IMR-90 (cell line): ENCODE measurements at regions of chr11 and their contacts with region 1.

Region 1: DNA sequence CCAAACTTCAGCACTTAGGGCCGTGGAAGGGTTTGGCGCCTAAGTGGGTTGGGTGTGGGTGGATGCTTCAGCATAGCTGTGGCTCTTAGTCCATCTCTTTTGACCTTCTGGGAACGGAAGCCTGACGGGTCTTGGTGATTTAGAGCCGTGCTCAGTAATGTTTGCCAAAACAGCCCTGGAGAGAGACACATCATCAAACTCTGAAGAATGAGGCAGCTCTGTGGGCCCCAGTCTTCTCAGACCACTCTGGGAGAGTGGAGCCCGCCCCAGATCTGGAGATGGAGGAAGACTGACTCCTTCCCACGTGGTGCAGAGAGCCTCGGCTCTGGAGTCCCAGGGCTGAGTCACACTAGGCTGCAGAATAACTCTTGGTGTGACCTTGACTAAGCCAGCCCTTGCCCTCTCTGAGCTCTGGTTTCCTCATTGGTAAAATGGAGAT is 168.9 kb downstream of the C11orf91 start:
- DNase-seq: peak; percentile 80
- ATAC-seq: peak; percentile 76
- H3K4me3 ChIP-seq: no peak overlapping the region
- H3K27ac ChIP-seq: no peak overlapping the region
- H3K4me1 ChIP-seq: peaks cover 4% of the 10 kb centered on the region
- H3K27me3 ChIP-seq: no peaks in the 10 kb centered on the region
- CTCF ChIP-seq: no peak
- POLR2A ChIP-seq: no peak
- RAD21 ChIP-seq: no peak

Region 2: GRCh38 chr11:33379947-33380346 is 151.8 kb before region 1 on chr11:
- CTCF ChIA-PET with region 1: no interaction called
- POLR2A ChIA-PET with region 1: no interaction called
- dilution Hi-C with region 1: no loop called
- in situ Hi-C with region 1: no loop called
- intact Hi-C with region 1: loop called (anchors 5 kb)
- DNase-seq: no peak
- ATAC-seq: no peak
- H3K4me3 ChIP-seq: no peak overlapping the region
- H3K27ac ChIP-seq: no peak overlapping the region
- H3K4me1 ChIP-seq: no peaks in the 10 kb centered on the region
- H3K27me3 ChIP-seq: peaks cover 2% of the 10 kb centered on the region; the same call in 1 of the 2 replicates
- CTCF ChIP-seq: no peak
- POLR2A ChIP-seq: no peak
- RAD21 ChIP-seq: no peak

Region 3: GRCh38 chr11:33452836-33453624 is 78.7 kb before region 1 on chr11:
- CTCF ChIA-PET with region 1: no interaction called
- POLR2A ChIA-PET with region 1: no interaction called
- dilution Hi-C with region 1: no loop called
- in situ Hi-C with region 1: no loop called
- intact Hi-C with region 1: loop called (anchors 5 kb)
- DNase-seq: peak; percentile 94
- ATAC-seq: peak; percentile 91
- H3K4me3 ChIP-seq: no peak overlapping the region
- H3K27ac ChIP-seq: no peak overlapping the region
- H3K4me1 ChIP-seq: peaks cover 8% of the 10 kb centered on the region
- H3K27me3 ChIP-seq: no peaks in the 10 kb centered on the region
- CTCF ChIP-seq: no peak
- POLR2A ChIP-seq: no peak
- RAD21 ChIP-seq: no peak

Region 4: DNA sequence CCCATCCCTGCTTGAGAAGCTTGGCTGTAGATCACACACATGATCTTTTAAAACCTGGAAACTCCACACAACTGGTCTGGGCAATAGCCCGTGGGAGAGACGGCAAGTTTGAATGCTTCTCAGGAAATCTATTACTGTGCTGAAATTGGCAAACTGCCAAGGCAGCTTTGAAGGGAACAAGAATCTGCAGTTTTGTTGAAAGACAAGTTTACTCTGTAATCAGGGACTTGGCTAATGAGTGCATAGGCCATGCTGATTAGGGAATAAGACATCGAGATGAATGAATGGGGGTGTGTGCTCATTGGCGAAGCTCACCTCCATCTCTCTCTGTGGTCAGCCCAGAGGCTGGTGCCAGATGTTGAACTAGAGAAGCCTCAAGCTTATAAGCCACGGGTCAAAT is 55.8 kb before region 1 on chr11:
- CTCF ChIA-PET with region 1: no interaction called
- POLR2A ChIA-PET with region 1: no interaction called
- dilution Hi-C with region 1: no loop called
- in situ Hi-C with region 1: no loop called
- intact Hi-C with region 1: no loop called
- DNase-seq: peak; percentile 57
- ATAC-seq: no peak
- H3K4me3 ChIP-seq: no peak overlapping the region
- H3K27ac ChIP-seq: no peak overlapping the region
- H3K4me1 ChIP-seq: peaks cover 4% of the 10 kb centered on the region; the same call in 1 of the 2 replicates
- H3K27me3 ChIP-seq: no peaks in the 10 kb centered on the region; the same call in 1 of the 2 replicates
- CTCF ChIP-seq: no peak
- POLR2A ChIP-seq: no peak
- RAD21 ChIP-seq: no peak

Region 5: DNA sequence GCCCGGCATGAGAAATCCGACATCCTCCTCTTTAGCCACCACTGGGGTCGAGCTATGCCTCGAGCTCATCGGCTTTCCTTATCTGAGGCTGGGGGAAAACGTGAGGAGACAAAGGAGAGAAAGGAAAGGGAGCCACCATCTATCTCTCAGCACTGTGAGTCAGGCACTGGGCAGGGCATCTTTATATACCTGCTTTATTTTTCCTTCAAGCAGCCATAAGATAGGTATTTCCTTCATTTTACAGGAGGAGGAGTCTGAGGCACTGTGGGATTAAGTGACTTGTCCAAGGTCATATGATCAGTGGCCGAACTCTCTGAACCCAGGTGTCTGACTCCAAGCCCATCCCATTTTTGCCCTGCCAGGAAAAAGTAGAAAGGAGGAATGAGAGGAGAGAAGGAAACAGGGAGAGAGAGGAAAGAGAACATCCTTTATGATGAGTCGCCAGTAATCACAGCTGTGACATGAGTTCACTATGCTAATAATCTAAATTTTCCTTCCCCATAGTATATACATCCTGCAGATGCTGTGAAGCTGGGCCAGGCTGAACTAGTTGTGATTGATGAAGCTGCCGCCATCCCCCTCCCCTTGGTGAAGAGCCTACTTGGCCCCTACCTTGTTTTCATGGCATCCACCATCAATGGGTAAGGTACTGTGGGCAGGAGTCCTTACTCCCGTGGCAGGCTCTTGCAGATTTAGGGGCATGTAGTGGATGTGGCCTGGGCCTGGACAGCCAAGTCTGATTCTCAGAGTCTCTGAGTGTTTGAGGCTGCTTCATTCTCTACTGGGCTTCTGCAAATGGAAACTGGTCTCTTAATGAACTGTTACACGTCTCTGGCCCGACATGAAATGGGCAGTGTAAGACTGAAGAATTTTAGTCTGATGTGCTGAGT is 595.4 kb after region 1 on chr11:
- CTCF ChIA-PET with region 1: no interaction called
- POLR2A ChIA-PET with region 1: no interaction called
- dilution Hi-C with region 1: no loop called
- in situ Hi-C with region 1: no loop called
- intact Hi-C with region 1: no loop called
- DNase-seq: peak; percentile 73
- ATAC-seq: peak; percentile 83
- H3K4me3 ChIP-seq: no peak overlapping the region
- H3K27ac ChIP-seq: peak overlapping the region; percentile 72
- H3K4me1 ChIP-seq: peaks cover 9% of the 10 kb centered on the region; the same call in 1 of the 2 replicates
- H3K27me3 ChIP-seq: no peaks in the 10 kb centered on the region
- CTCF ChIP-seq: no peak
- POLR2A ChIP-seq: no peak
- RAD21 ChIP-seq: no peak